ENCODE measurements at regions of chr11 and their contacts with region 1.

Region 1: DNA sequence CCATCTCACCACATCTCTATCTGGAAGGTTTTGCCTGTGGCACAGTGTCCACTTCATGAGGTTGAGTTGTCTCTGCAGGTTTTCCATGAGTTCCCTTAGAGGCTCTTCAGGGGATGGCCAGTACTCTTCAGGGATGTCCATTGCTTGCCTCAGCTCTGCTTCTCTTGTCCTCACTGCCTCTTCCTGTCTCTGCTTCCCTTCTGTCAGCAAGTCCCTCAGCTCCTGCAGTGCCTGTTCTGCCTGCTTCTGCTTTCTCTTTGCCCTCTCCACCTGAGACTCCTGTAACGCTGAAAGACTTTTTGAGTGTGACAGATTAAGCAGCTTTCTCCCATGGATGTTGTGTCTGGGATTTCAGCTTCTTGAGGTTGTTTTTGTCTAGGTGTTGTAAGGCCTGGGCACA is 38.2 kb upstream of the MRPL17 start:
- DNase-seq: no peak
- H3K4me3 Mint-ChIP-seq: no peak overlapping the region
- H3K27ac Mint-ChIP-seq: peak overlapping the region; percentile 33
- H3K4me1 Mint-ChIP-seq: peaks cover 57% of the 10 kb centered on the region
- H3K27me3 Mint-ChIP-seq: no peaks in the 10 kb centered on the region

Region 2: GRCh38 chr11:6737872-6738466 is 16.6 kb after region 1 on chr11:
- CTCF ChIA-PET with region 1: interaction called, 13 read pairs
- POLR2A ChIA-PET with region 1: interaction called, 3 read pairs
- DNase-seq: peak; percentile 71
- H3K4me3 Mint-ChIP-seq: no peak overlapping the region
- H3K27ac Mint-ChIP-seq: peak overlapping the region; percentile 29
- H3K4me1 Mint-ChIP-seq: peaks cover 86% of the 10 kb centered on the region
- H3K27me3 Mint-ChIP-seq: no peaks in the 10 kb centered on the region